Activated CD8-positive, alpha-beta T cell treated with anti-CD3 and anti-CD28 coated beads for 36 hours (primary cell): ENCODE measurements at regions of chrX and their contacts with region 1.

Region 1: GRCh38 chrX:31036895-31037294 is 34.9 kb downstream of the FTHL17 start:
- DNase-seq: peak; percentile 20
- ATAC-seq: no peak
- H3K4me3 Mint-ChIP-seq: no peak overlapping the region
- H3K27ac Mint-ChIP-seq: no peak overlapping the region
- H3K4me1 Mint-ChIP-seq: peaks cover 5% of the 10 kb centered on the region
- H3K27me3 Mint-ChIP-seq: peaks cover 4% of the 10 kb centered on the region
- CTCF ChIP-seq: no peak

Region 2: GRCh38 chrX:30971774-30972603 is 64.9 kb before region 1 on chrX:
- CTCF ChIA-PET with region 1: no interaction called
- POLR2A ChIA-PET with region 1: no interaction called
- intact Hi-C with region 1: no loop called
- DNase-seq: peak; percentile 16
- ATAC-seq: peak; percentile 80
- H3K4me3 Mint-ChIP-seq: peak overlapping the region; percentile 39
- H3K27ac Mint-ChIP-seq: no peak overlapping the region
- H3K4me1 Mint-ChIP-seq: peaks cover 5% of the 10 kb centered on the region
- H3K27me3 Mint-ChIP-seq: no peaks in the 10 kb centered on the region
- CTCF ChIP-seq: peak; percentile 45

Region 3: DNA sequence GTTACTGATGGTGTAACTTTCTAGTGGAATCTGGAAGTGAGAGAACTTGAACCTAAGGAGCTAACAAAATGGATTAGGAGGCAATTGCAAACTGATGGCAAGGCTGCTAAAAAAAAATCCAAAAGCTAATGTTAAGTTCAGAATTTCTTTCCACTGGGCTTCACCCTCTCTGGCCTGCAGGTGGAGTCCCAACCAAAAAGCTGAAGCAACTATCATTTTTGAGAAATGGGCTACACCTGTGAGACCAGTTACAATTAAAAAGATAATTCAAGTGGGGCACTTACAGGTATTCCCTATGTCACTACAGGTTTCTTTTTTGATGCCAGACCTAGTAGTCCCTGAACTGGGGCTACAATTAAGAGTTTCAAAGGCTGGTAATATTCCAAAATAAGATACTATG is 177.0 kb after region 1 on chrX:
- CTCF ChIA-PET with region 1: interaction called, 12 read pairs
- POLR2A ChIA-PET with region 1: no interaction called
- intact Hi-C with region 1: no loop called
- DNase-seq: peak; percentile 4
- ATAC-seq: no peak
- H3K4me3 Mint-ChIP-seq: no peak overlapping the region
- H3K27ac Mint-ChIP-seq: no peak overlapping the region
- H3K4me1 Mint-ChIP-seq: no peaks in the 10 kb centered on the region
- H3K27me3 Mint-ChIP-seq: no peaks in the 10 kb centered on the region
- CTCF ChIP-seq: no peak

Region 4: DNA sequence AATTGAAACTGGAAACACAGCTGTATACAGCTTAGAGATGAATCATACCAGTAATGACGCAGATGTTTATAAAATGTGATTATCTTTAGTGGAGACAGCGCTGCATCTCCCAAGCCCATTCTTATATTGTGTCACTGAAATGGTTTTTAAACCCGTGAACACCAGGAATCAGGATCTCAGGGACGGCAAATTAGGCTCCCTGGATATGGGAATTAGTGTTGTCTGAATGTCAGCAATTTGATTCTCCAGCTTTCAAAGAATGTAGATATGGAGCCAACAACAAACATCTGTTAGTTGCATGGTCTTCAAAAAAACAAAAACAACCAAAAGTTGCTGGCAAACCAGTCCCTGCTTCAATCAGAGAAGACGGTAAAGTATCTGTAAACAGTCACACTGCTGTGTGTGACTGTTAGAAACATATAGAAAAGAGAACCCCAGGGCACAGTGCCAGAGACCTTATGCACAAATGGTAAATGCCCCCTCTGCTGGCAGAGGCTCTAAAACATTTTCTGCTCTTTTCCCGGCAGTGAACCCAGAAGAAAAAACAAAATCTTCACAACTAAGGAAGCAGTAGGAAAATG is 386.8 kb after region 1 on chrX:
- CTCF ChIA-PET with region 1: interaction called, 15 read pairs
- POLR2A ChIA-PET with region 1: no interaction called
- intact Hi-C with region 1: no loop called
- DNase-seq: peak; percentile 20
- ATAC-seq: no peak
- H3K4me3 Mint-ChIP-seq: no peak overlapping the region
- H3K27ac Mint-ChIP-seq: no peak overlapping the region
- H3K4me1 Mint-ChIP-seq: no peaks in the 10 kb centered on the region
- H3K27me3 Mint-ChIP-seq: no peaks in the 10 kb centered on the region
- CTCF ChIP-seq: no peak

Region 5: DNA sequence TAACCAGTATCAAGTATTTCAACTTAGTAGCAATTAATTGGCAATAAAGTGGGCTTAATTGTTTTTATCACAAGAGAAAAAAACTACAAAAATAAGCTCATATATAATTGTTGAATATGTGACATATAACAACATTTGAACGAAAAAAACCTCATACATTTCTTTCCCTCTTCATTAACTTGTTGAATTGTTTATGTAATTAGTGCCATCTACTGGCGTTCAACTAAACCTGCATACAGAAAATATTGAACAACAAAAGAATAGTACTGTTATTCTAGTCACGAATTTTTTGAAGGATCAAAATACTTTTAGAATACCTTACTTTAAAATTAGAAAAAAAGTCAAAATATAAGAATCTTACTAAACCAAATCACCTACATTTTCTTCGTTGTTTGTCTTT is 621.5 kb after region 1 on chrX:
- CTCF ChIA-PET with region 1: interaction called, 15 read pairs
- POLR2A ChIA-PET with region 1: no interaction called
- intact Hi-C with region 1: loop called (anchors 5 kb)
- DNase-seq: no peak
- ATAC-seq: no peak
- H3K4me3 Mint-ChIP-seq: no peak overlapping the region
- H3K27ac Mint-ChIP-seq: no peak overlapping the region
- H3K4me1 Mint-ChIP-seq: no peaks in the 10 kb centered on the region
- H3K27me3 Mint-ChIP-seq: no peaks in the 10 kb centered on the region
- CTCF ChIP-seq: no peak